Dorsolateral prefrontal cortex (tissue), 120 donors: ENCODE measurements at regions of chr11 and their contacts with region 1.

Region 1: GRCh38 chr11:119205574-119206510 is at the start of gene CBL:
- DNase-seq: peak; percentile 86 to 97 (median 92)
- H3K4me3 ChIP-seq: peak within 1 kb of the TSS; percentile 48 to 99 (median 92)
- H3K27ac ChIP-seq: peak within 1 kb of the TSS; percentile 49 to 97 (median 91)
- H3K27me3 ChIP-seq: no peaks in the 10 kb centered on the region
- CTCF ChIP-seq: peak; percentile 23 to 97 (median 86)
- total RNA-seq, gene CBL: 22.9 to 40.0 (median 30.5) TPM

Region 2: GRCh38 chr11:119121008-119121810 is 84.6 kb before region 1 on chr11 and contains the start of gene HINFP:
- intact Hi-C with region 1: loop called in 1 of 2 experiments (anchors 5 kb)
- DNase-seq: peak; percentile 99 to 100 (median 100)
- H3K4me3 ChIP-seq: peak within 1 kb of the TSS; percentile 67 to 99 (median 93)
- H3K27ac ChIP-seq: peak within 1 kb of the TSS; percentile 57 to 97 (median 91)
- H3K27me3 ChIP-seq: no peaks in the 10 kb centered on the region
- CTCF ChIP-seq: peak in 26 of 56 donors; percentile 6 to 55 (median 22)
- total RNA-seq, gene HINFP: 29.8 to 70.5 (median 47.9) TPM

Region 3: GRCh38 chr11:119149018-119149785 is 56.6 kb before region 1 on chr11 and contains the start of gene ABCG4:
- intact Hi-C with region 1: no loop called
- DNase-seq: peak in 3 of 10 donors; percentile 18 to 62 (median 56)
- H3K4me3 ChIP-seq: peak within 1 kb of the TSS; percentile 52 to 85 (median 71)
- H3K27ac ChIP-seq: peak within 1 kb of the TSS in 21 of 59 donors; percentile 3 to 71 (median 39)
- H3K27me3 ChIP-seq: no peaks in the 10 kb centered on the region
- CTCF ChIP-seq: no peak
- total RNA-seq, gene ABCG4: 5.2 to 31.5 (median 18.1) TPM

Region 4: GRCh38 chr11:119315131-119316015 is 109.5 kb after region 1 on chr11:
- intact Hi-C with region 1: loop called (anchors 5 kb)
- DNase-seq: peak in 6 of 10 donors; percentile 65 to 82 (median 73)
- H3K4me3 ChIP-seq: peak overlapping the region; percentile 52 to 87 (median 72)
- H3K27ac ChIP-seq: peak overlapping the region; percentile 72 to 98 (median 94)
- H3K27me3 ChIP-seq: no peaks in the 10 kb centered on the region
- CTCF ChIP-seq: peak in 33 of 56 donors; percentile 9 to 48 (median 30)

Region 5: DNA sequence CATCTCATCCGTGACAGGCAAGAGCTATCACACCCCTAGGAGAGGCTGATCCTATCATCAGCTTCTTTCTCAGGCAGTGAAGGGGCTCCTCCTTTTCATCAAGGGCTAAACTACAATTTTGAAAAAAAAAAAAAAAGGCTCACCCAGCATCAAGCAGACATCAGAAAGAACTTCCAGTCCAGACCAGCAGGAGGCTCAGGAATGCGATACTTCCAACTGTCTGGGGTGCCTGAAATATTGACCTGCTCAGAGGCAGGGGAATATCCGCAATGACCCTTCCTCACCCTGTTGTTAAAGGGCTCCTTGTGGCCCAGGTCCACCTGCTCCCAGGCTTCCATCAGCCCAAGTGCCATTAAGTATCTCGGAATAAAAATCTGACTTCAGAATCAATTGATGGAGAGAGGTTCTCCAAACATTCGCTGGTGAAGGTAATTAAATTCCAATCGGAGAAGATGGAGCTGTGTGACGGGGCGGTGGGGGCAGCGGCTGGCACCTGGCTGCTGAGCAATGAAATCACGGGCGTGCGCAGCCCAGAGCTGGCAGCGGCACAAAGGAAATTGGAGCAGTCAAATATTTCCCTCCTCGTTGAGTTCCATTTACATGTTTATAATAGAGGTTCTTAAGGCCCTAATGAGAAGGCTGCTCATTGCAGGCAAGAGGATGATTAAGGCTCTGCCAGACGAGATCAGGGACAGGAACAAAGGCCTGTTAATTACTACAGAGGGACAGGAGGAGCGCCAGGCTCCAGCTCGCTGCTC is 286.1 kb after region 1 on chr11:
- intact Hi-C with region 1: no loop called
- DNase-seq: peak in 2 of 10 donors; percentile 35 to 57
- H3K4me3 ChIP-seq: no peak overlapping the region
- H3K27ac ChIP-seq: peak overlapping the region in 2 of 59 donors; percentile 10 to 39
- H3K27me3 ChIP-seq: no peaks in the 10 kb centered on the region
- CTCF ChIP-seq: peak in 47 of 56 donors; percentile 17 to 60 (median 45)